HCT116 (cell line): ENCODE measurements at regions of chr12 and their contacts with region 1.

Region 1: GRCh38 chr12:14365294-14366208 is at the start of gene ATF7IP:
- DNase-seq: peak; percentile 90
- ATAC-seq: peak; percentile 96
- H3K4me3 ChIP-seq: peak within 1 kb of the TSS; percentile 50 to 51
- H3K27ac ChIP-seq: peak within 1 kb of the TSS; percentile 99
- H3K4me1 ChIP-seq: peaks cover 2 to 25% of the 10 kb centered on the region in 2 experiments; a peak in 3 of 4 replicates
- H3K27me3 ChIP-seq: no peaks in the 10 kb centered on the region
- CTCF ChIP-seq: peak; percentile 15 to 41 (median 36); a peak in 3 of 6 replicates
- POLR2A ChIP-seq: no peak
- RAD21 ChIP-seq: peak; percentile 35
- total RNA-seq, gene ATF7IP: 38.6 TPM

Region 2: DNA sequence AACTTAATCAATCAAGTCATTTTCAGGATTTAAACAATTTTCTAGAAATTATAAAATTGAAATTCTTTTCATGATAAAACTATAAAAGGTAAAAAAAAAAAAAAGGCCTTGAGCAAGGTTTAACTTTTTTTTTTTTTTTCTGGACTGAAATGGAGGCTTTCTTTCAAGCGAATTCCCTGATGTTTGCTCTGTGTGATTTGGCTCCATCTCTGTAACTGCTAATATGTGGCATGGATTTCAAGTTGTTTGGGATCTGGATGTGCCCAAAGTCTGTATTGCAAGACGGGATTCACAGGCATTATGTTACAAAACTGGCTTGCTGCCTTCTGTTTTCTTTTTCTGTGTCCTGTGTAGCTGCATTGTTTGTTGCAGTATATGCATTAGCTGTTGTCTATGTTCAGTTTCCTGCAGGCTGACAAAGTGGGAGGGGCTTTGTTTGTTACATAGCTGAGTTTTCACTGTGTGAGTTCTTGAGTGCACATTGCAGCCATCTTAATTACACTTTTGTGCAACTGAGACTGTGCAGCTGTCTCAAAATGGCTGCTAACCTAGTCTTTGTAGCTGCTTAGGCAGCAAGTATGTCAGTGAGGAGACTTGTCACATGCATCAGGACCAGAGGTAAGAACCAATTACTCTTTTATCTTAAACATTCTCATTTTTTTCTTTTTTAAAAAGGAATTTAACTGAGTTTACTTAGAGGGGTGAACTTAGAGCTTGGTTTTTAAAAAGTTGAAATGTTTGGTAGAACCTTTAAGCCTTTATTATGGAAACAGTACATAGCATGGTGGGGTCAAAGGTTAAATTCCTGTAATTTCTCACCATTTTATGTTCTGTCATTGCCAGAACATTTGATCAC is 19.5 kb after region 1 on chr12:
- CTCF ChIA-PET with region 1: no interaction called
- POLR2A ChIA-PET with region 1: interaction called, 18 read pairs
- RAD21 ChIA-PET with region 1: no interaction called
- intact Hi-C with region 1: no loop called
- DNase-seq: peak; percentile 93
- ATAC-seq: peak; percentile 95
- H3K4me3 ChIP-seq: peak overlapping the region; percentile 18 to 36
- H3K27ac ChIP-seq: peak overlapping the region; percentile 64
- H3K4me1 ChIP-seq: peaks cover 7 to 29% of the 10 kb centered on the region in 2 experiments
- H3K27me3 ChIP-seq: no peaks in the 10 kb centered on the region
- CTCF ChIP-seq: no peak
- POLR2A ChIP-seq: no peak
- RAD21 ChIP-seq: 0 out of 2 replicates have a peak, but pooled peaks have one; percentile 10

Region 3: DNA sequence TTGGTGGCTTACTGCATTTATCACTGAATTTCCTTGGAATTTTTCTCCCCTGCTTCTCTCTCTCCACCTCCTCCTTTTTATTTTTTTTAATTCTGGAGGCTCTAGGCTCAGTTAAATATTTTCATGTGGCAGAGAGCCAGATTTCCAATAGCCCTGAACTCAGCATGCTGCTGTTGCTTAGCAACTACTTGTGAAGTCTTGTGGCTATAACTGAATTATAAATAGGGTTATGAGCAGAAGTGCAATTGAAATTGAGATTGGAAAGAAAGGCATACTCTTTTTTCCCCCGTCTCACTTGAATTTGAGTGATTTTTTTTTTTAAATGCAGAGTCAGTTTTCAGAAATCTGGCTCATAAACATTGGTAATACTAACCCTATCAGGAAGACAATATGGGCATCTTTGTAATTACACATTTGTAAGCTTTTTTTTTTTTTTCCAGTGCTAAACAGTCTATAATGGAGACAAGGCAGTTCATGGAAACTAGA is 38.2 kb after region 1 on chr12:
- CTCF ChIA-PET with region 1: interaction called, 3 read pairs
- POLR2A ChIA-PET with region 1: interaction called, 3 read pairs
- RAD21 ChIA-PET with region 1: no interaction called
- intact Hi-C with region 1: loop called (anchors 5 kb)
- DNase-seq: no peak
- ATAC-seq: no peak
- H3K4me3 ChIP-seq: no peak overlapping the region
- H3K27ac ChIP-seq: no peak overlapping the region; the same call in 1 of the 2 replicates
- H3K4me1 ChIP-seq: peaks cover 17 to 31% of the 10 kb centered on the region in 2 experiments
- H3K27me3 ChIP-seq: no peaks in the 10 kb centered on the region
- CTCF ChIP-seq: no peak
- POLR2A ChIP-seq: no peak
- RAD21 ChIP-seq: no peak